ENCODE measurements at regions of chr4 and their contacts with region 1.

Region 1: DNA sequence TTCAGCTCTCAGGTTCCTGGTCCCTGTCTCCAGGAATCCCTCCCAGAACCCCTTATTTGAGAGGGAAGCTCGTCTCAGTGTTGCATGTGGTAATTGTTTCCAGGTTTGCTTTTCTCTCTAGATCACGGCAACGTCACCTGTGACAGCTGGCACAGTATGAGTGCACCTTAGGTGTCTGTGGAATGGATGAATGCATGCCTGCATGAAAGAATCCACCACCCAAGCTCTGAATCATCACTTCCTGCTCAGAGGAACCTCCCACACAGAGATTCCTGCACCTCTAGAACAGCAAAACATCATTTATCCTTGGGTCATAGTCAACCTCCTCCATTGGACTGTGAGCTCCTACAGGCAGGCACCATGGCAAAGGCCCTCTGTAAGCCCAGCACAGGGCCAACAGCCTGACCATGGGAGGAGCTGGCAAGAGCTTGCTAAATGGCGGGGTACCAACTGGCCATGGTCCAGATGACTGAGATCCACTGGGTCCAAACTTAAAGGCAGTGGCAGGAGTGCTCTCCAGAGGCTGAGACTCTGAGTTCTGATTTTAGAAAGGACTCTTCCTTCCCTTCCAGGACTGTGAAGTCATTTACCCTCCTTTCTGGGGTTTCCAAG is 116.2 kb downstream of the SLC2A9 start:
- DNase-seq: peak; percentile 78
- H3K4me3 ChIP-seq: no peak overlapping the region
- H3K27ac ChIP-seq: no peak overlapping the region
- H3K4me1 ChIP-seq: peaks cover 12% of the 10 kb centered on the region
- H3K27me3 ChIP-seq: no peaks in the 10 kb centered on the region
- CTCF ChIP-seq: no peak

Region 2: GRCh38 chr4:10006231-10006600 is 101.1 kb after region 1 on chr4:
- CTCF ChIA-PET with region 1: no interaction called
- dilution Hi-C with region 1: no loop called
- in situ Hi-C with region 1: no loop called
- intact Hi-C with region 1: loop called (anchors 5 kb)
- DNase-seq: peak; percentile 80
- H3K4me3 ChIP-seq: no peak overlapping the region
- H3K27ac ChIP-seq: peak overlapping the region; percentile 77
- H3K4me1 ChIP-seq: peaks cover 92% of the 10 kb centered on the region
- H3K27me3 ChIP-seq: no peaks in the 10 kb centered on the region
- CTCF ChIP-seq: no peak

Measured in mammary epithelial cell (primary cell).